Head of caudate nucleus (tissue), 42 donors: ENCODE measurements at regions of chr4 and their contacts with region 1.

Region 1: DNA sequence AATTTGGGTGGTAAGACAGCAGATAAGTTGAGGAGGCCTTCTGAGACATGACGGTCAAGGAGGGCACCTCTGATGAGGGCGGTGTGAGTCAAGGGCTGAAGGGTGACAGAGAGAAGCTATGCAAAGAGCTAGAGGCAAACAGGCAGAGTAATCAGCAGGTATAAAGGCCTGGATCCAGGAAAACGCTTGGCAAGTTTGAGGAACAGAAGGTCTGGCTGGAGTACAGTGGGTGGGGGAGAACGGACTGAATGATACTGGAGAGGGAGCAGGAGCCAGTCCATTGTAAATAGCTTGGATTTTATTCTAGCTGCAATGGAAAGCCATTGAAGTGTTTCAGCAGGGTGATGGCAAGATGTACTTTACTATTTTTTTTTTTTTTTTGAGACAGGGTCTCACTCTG is 39.3 kb downstream of the RAB33B start:
- DNase-seq: no peak

Region 2: GRCh38 chr4:139642364-139642763 is 149.2 kb after region 1 on chr4:
- intact Hi-C with region 1: loop called (anchors 10 kb)
- DNase-seq: no peak